Calu3 (cell line): ENCODE measurements at regions of chr18 and their contacts with region 1.

Region 1: DNA sequence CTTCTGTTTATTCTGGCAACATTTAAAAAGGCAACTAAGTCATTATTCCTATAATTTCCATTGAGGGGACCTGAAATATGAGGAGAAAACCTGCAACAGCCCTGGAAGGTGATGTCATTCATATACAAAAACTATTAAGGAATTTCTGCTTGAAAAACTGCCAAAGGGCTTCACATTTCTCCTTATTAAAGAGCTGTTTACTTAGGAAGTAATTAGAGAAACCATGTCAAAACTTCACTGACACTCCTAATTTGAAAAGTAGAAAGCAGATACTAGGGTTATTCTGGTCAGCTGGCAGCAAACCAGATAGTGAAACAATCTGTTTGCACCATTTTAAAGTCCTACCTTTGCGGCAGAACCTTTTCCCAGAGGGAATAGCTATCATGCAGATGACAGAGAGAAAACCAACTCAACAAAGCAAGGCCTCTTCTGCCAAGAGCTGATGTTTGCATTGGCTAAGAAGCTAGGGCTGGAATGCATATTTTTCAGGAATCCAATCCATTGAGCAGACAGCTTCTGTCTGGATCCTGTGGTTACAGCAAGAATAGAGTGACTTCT is 592.2 kb upstream of the SYT4 start:
- DNase-seq: no peak
- H3K4me3 Mint-ChIP-seq: no peak overlapping the region
- H3K27ac Mint-ChIP-seq: no peak overlapping the region
- H3K4me1 Mint-ChIP-seq: no peaks in the 10 kb centered on the region
- H3K27me3 Mint-ChIP-seq: no peaks in the 10 kb centered on the region
- CTCF ChIP-seq: no peak

Region 2: DNA sequence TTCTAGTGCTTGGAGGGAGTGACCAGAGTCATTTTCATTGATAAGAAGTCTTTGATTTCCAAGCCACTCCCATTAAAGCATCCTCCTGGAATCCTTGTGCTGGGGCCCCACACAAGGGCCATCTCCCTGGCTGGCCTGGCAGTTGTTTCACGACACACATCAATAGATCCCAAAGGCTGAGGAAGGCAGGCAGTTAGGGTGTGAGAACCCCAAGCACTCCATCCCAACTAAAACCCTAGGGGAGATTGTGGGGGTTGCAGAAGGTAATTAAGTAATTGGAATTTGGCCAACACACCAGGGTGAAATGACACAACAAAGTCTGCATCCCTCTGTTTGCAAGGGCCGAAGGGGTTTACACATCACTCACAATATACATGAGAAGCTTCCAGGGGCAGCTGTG is 14.2 kb before region 1 on chr18:
- CTCF ChIA-PET with region 1: no interaction called
- intact Hi-C with region 1: loop called (anchors 1 kb)
- DNase-seq: no peak
- H3K4me3 Mint-ChIP-seq: no peak overlapping the region
- H3K27ac Mint-ChIP-seq: no peak overlapping the region
- H3K4me1 Mint-ChIP-seq: no peaks in the 10 kb centered on the region
- H3K27me3 Mint-ChIP-seq: no peaks in the 10 kb centered on the region
- CTCF ChIP-seq: no peak

Region 3: GRCh38 chr18:43919551-43919950 is 50.0 kb after region 1 on chr18:
- CTCF ChIA-PET with region 1: no interaction called
- intact Hi-C with region 1: no loop called
- DNase-seq: no peak
- H3K4me3 Mint-ChIP-seq: no peak overlapping the region
- H3K27ac Mint-ChIP-seq: no peak overlapping the region
- H3K4me1 Mint-ChIP-seq: peaks cover 15% of the 10 kb centered on the region
- H3K27me3 Mint-ChIP-seq: no peaks in the 10 kb centered on the region
- CTCF ChIP-seq: no peak